ENCODE measurements at regions of chr11 and their contacts with region 1.

Region 1: GRCh38 chr11:113305440-113306336 is 8.7 kb upstream of the TTC12 start:
- DNase-seq: peak; percentile 38 to 58 (median 45)
- ATAC-seq: peak; percentile 90
- H3K4me3 ChIP-seq: no peak overlapping the region
- H3K27ac ChIP-seq: no peak overlapping the region
- H3K4me1 ChIP-seq: no peaks in the 10 kb centered on the region
- H3K27me3 ChIP-seq: peaks cover 5 to 16% of the 10 kb centered on the region in 2 experiments; a peak in 4 of 5 replicates
- CTCF ChIP-seq: peak; percentile 83 to 90 (median 89)
- EP300 ChIP-seq: no peak
- POLR2A ChIP-seq: no peak
- RAD21 ChIP-seq: peak; percentile 94

Region 2: DNA sequence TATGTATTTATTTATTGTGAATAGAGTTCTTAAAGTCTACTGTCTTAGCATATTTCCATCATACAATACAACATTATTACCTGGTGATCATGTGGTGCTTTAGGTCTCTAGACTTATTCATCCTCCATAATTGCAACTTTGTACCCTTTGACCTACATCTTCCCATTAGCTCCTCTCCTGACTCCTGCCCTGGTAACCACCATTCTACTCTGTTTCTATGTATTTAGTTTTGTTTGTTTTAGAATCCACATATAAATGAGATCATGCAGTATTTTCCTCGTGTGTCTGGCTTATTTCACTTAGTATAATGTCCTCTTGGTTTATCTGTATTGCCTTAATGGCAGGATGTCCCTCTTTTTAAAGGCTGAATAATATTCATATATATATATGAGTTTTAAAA is 321.8 kb before region 1 on chr11:
- CTCF ChIA-PET with region 1: no interaction called
- POLR2A ChIA-PET with region 1: no interaction called
- in situ Hi-C with region 1: no loop called
- intact Hi-C with region 1: no loop called
- DNase-seq: no peak
- ATAC-seq: no peak
- H3K4me3 ChIP-seq: no peak overlapping the region
- H3K27ac ChIP-seq: no peak overlapping the region
- H3K4me1 ChIP-seq: no peaks in the 10 kb centered on the region
- H3K27me3 ChIP-seq: no peaks in the 10 kb centered on the region
- CTCF ChIP-seq: no peak
- EP300 ChIP-seq: no peak
- POLR2A ChIP-seq: no peak
- RAD21 ChIP-seq: no peak

Region 3: DNA sequence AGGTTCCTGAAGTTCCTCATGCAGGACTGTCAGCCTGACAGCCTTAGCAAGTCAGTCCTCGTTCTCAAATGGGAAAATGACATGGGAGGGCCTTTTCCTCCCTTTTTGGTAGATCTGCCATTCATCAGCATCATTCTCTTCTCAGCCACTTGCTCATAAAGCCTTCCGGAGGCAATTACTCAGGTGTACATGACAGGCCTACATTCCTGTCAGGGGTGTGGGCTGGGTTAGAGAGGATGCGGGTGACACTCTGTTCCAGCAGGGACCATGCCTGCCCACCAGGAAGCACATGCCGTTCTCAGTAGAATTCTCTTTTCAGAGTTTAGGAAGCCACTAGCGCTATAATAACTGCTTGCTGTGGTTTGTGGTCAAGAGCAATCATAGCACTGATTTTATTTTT is 57.7 kb after region 1 on chr11:
- CTCF ChIA-PET with region 1: no interaction called
- POLR2A ChIA-PET with region 1: no interaction called
- in situ Hi-C with region 1: no loop called
- intact Hi-C with region 1: no loop called
- DNase-seq: no peak
- ATAC-seq: no peak
- H3K4me3 ChIP-seq: no peak overlapping the region
- H3K27ac ChIP-seq: no peak overlapping the region
- H3K4me1 ChIP-seq: no peaks in the 10 kb centered on the region
- H3K27me3 ChIP-seq: peaks cover 0 to 23% of the 10 kb centered on the region in 2 experiments; a peak in 2 of 5 replicates
- CTCF ChIP-seq: no peak
- EP300 ChIP-seq: no peak
- POLR2A ChIP-seq: no peak
- RAD21 ChIP-seq: no peak

Region 4: DNA sequence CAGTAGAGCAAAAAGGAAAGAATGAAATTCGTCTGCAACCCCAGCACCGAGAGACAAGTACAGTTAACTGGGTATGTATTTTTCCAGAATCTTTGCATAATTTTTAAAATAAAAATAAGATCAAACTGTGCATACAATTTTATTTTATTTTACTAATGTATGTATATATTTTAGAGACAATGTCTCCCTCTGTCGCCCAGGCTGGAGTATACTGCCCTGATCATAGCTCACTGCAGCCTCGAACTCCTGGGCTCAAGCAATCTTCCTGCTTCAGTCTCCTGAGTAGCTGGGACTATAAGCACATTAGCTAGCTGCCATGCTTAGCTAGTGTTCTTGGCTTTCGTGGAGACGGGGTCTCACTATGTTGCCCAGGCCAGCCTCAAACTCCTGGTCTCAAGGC is 188.3 kb after region 1 on chr11:
- CTCF ChIA-PET with region 1: interaction called, 3 read pairs
- POLR2A ChIA-PET with region 1: no interaction called
- in situ Hi-C with region 1: no loop called
- intact Hi-C with region 1: loop called (anchors 10 kb)
- DNase-seq: peak in 1 of 4 experiments; percentile 15
- ATAC-seq: no peak
- H3K4me3 ChIP-seq: no peak overlapping the region
- H3K27ac ChIP-seq: no peak overlapping the region
- H3K4me1 ChIP-seq: no peaks in the 10 kb centered on the region
- H3K27me3 ChIP-seq: peaks cover 0 to 24% of the 10 kb centered on the region in 2 experiments; a peak in 3 of 5 replicates
- CTCF ChIP-seq: peak in 1 of 3 experiments; percentile 37; a peak in 3 of 6 replicates
- EP300 ChIP-seq: no peak
- POLR2A ChIP-seq: no peak
- RAD21 ChIP-seq: peak; percentile 19 to 37; a peak in 3 of 4 replicates

Region 5: GRCh38 chr11:113532697-113533424 is 227.2 kb after region 1 on chr11:
- CTCF ChIA-PET with region 1: interaction called, 4 read pairs
- POLR2A ChIA-PET with region 1: interaction called, 3 read pairs
- in situ Hi-C with region 1: loop called (anchors 25 kb)
- intact Hi-C with region 1: loop called (anchors 1 kb)
- DNase-seq: peak; percentile 65 to 79 (median 70)
- ATAC-seq: peak; percentile 93
- H3K4me3 ChIP-seq: no peak overlapping the region
- H3K27ac ChIP-seq: no peak overlapping the region
- H3K4me1 ChIP-seq: no peaks in the 10 kb centered on the region; a peak in 1 of 5 replicates
- H3K27me3 ChIP-seq: peaks cover 7 to 12% of the 10 kb centered on the region in 2 experiments; a peak in 4 of 5 replicates
- CTCF ChIP-seq: peak; percentile 79 to 87 (median 84)
- EP300 ChIP-seq: no peak
- POLR2A ChIP-seq: no peak
- RAD21 ChIP-seq: peak; percentile 73 to 79

Region 6: GRCh38 chr11:113796663-113797259 is 491.1 kb after region 1 on chr11:
- CTCF ChIA-PET with region 1: interaction called, 4 read pairs
- POLR2A ChIA-PET with region 1: no interaction called
- in situ Hi-C with region 1: no loop called
- intact Hi-C with region 1: loop called (anchors 5 kb)
- DNase-seq: peak; percentile 49 to 60 (median 56)
- ATAC-seq: peak; percentile 99
- H3K4me3 ChIP-seq: no peak overlapping the region
- H3K27ac ChIP-seq: no peak overlapping the region
- H3K4me1 ChIP-seq: no peaks in the 10 kb centered on the region
- H3K27me3 ChIP-seq: no peaks in the 10 kb centered on the region
- CTCF ChIP-seq: peak; percentile 49 to 67 (median 61); a peak in 4 of 6 replicates
- EP300 ChIP-seq: no peak
- POLR2A ChIP-seq: no peak
- RAD21 ChIP-seq: peak in 1 of 2 experiments; percentile 59; a peak in 2 of 4 replicates

Measured in K562 (cell line).